Psoas muscle (tissue), 8 donors: ENCODE measurements at regions of chr14 and their contacts with region 1.

Region 1: DNA sequence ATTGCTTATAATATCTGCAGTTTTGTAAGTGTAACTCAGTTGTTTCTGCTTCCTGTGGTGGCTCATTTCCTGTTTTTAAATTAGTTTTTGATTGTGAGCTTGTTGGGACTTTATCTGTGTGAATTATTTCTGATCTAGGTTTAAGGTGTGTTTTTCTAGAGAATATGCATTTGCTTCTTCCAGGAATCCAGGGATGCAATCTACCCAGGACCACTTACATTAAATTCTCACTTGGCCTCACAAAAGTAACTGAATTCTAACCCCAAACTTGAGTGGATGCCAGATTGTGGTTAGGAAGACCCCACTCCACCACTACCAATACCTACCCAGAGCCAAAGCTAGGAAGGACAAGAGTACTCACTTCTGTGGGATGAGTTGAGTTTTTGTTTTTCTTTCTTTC is 11.9 kb downstream of the STYX start:
- DNase-seq: no peak
- ATAC-seq: no peak
- H3K4me3 ChIP-seq: no peak overlapping the region
- H3K27ac ChIP-seq: peak overlapping the region; percentile 8
- H3K4me1 ChIP-seq: no peaks in the 10 kb centered on the region
- H3K27me3 ChIP-seq: no peaks in the 10 kb centered on the region
- CTCF ChIP-seq: no peak

Region 2: DNA sequence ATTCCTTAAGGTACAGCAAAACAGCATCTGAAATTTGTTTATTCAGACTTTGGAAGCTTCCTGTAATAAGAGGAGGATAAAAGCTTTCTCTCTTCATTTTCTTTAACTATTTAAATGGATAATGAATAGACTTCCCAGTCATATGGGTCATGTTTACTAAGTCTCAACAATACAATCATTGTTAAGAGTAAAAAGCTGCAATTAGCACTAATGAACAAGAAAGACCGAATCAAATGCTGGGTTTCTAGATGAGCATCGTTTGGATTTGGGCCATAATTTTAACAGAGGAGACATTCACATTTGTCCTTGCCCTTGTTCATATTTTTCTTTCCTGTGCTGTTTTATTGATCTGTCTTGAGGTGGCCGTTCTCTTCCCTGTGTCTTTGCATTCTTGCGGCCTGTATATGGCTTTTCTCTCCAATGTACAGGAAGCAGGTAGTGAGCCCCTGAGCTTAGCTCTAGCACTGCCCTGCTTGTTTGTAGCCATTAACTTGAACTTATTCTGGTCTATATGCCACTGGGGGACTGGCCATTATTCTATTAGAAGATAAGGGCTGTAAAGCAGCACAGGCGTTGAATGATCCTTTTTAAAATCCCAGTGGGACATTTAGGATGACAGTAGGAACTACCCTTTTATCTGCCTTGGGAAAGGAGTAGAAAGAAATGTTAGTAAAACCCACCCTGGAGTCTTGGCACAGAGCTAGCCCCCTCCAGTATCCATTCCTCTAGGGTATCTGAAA is 1835.4 kb before region 1 on chr14:
- intact Hi-C with region 1: loop called in 1 of 2 experiments (anchors 5 kb)
- DNase-seq: no peak
- ATAC-seq: no peak
- H3K4me3 ChIP-seq: no peak overlapping the region
- H3K27ac ChIP-seq: no peak overlapping the region
- H3K4me1 ChIP-seq: no peaks in the 10 kb centered on the region
- H3K27me3 ChIP-seq: no peaks in the 10 kb centered on the region
- CTCF ChIP-seq: no peak

Region 3: DNA sequence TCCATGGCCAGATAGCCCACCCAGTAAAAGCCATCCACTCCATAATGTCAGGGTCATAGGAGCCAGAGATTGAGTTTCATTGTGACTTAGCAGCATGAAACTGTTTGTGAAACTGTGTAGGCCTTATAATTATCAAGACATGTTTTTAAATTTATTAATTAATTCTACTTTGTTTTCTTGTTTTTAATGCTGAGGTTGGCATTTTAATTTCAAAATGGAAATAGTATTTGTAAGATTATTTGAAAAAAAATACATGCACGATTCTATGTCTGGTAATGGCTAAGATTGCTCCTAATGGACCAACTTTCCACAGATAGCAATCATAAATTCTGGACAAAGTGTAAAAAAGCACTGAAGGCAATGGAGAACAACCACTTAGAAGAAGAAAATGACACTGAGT is 122.2 kb before region 1 on chr14:
- intact Hi-C with region 1: no loop called
- DNase-seq: no peak
- ATAC-seq: no peak
- H3K4me3 ChIP-seq: no peak overlapping the region
- H3K27ac ChIP-seq: no peak overlapping the region
- H3K4me1 ChIP-seq: no peaks in the 10 kb centered on the region
- H3K27me3 ChIP-seq: no peaks in the 10 kb centered on the region
- CTCF ChIP-seq: no peak

Region 4: DNA sequence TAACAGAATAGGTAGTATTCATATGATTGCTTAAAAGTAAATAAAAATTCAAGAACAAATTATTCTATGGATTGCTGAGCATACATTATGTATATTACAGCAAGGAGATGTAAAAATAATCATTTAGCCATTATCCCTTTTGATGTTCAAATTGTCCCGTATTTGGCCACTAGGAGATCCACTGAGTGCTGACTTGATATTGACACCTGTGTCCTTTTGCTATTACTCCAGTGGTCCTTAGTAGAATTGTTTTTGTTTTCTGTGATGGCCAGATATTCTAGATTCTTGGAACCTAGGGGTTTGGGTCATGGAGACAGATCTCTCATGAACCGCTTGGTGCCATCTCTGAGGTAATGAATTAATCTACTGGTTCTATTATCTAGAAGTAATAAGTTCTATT is 63.3 kb before region 1 on chr14:
- intact Hi-C with region 1: no loop called
- DNase-seq: no peak
- ATAC-seq: no peak
- H3K4me3 ChIP-seq: no peak overlapping the region
- H3K27ac ChIP-seq: no peak overlapping the region
- H3K4me1 ChIP-seq: no peaks in the 10 kb centered on the region
- H3K27me3 ChIP-seq: no peaks in the 10 kb centered on the region
- CTCF ChIP-seq: no peak